ENCODE measurements at regions of chr18 and their contacts with region 1.

Region 1: DNA sequence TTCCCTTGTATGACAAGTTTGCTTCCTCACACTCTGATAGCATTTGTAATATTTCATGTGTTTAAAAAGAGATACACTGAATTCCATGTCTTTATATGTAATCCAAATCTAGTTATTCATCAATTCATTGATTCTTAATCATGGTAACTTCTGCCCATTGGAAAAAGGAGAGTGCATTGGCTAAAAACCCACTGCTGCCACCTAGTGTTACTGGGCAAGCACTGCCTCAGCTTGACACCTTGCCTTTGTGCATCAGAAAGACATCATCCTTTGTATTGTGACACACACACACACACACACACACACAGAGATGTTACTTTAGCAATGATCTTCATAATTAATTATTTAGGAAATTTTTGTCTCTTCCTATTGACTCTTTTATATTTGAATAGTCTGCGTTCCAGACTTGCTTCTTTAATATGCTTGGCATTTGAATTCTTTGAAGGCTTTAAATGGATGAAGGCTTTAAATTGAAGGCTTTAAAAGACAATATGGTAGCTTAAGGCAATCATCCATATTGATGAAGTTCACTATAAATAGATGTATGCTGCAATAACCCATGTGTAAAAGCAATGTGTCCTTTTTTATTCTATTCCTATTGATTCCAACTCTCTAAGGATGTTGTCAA is 414.2 kb upstream of the CHST9 start:
- DNase-seq: peak in 8 of 10 donors; percentile 17 to 93 (median 52)

Region 2: GRCh38 chr18:27017901-27018500 is 581.3 kb before region 1 on chr18:
- intact Hi-C with region 1: loop called (anchors 1 kb)
- DNase-seq: no peak

Region 3: GRCh38 chr18:27363872-27364271 is 235.4 kb before region 1 on chr18:
- intact Hi-C with region 1: loop called (anchors 2 kb)
- DNase-seq: no peak

Region 4: GRCh38 chr18:27616324-27616723 is 17.0 kb after region 1 on chr18:
- intact Hi-C with region 1: no loop called
- DNase-seq: no peak

Measured in posterior cingulate gyrus (tissue), 11 donors.